CD8-positive, alpha-beta memory T cell (primary cell): ENCODE measurements at regions of chr22 and their contacts with region 1.

Region 1: GRCh38 chr22:39932918-39933649 is 27.1 kb upstream of the TMA7B start:
- DNase-seq: peak; percentile 46 to 76 (median 67)
- H3K4me3 ChIP-seq: peak overlapping the region; percentile 30
- H3K4me3 Mint-ChIP-seq: peak overlapping the region in 6 of 7 donors; percentile 74 to 85 (median 81)
- H3K27ac ChIP-seq: no peak overlapping the region
- H3K27ac Mint-ChIP-seq: peak overlapping the region in 7 of 8 donors; percentile 76 to 98 (median 92)
- H3K4me1 ChIP-seq: peaks cover 98% of the 10 kb centered on the region
- H3K4me1 Mint-ChIP-seq: peaks cover 55% of the 10 kb centered on the region in 3 donors
- H3K27me3 ChIP-seq: no peaks in the 10 kb centered on the region
- H3K27me3 Mint-ChIP-seq: no peaks in the 10 kb centered on the region

Region 2: DNA sequence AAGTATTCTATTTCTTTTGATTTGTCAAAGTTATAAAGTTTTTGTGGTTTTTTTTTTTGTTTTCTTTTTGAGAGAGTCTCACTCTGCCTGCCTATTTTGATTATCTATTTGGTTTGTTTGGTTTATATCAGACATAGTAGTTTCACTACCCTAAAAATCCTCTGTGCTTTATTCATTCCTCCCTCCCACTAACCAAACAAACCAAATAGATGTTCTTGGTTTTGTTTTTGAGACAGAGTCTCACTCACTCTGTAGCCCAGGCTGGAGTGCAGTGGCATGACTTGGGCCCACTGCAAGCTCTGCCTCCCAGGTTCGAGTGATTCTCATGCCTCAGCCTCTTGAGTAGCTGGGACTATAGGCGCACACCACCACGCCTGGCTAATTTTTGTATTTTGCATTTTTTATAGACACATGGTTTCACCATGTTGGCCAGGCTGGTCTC is 107.4 kb before region 1 on chr22:
- CTCF ChIA-PET with region 1: no interaction called
- POLR2A ChIA-PET with region 1: no interaction called
- DNase-seq: no peak
- H3K4me3 ChIP-seq: no peak overlapping the region
- H3K4me3 Mint-ChIP-seq: no peak overlapping the region
- H3K27ac ChIP-seq: no peak overlapping the region
- H3K27ac Mint-ChIP-seq: no peak overlapping the region
- H3K4me1 ChIP-seq: peaks cover under 1% of the 10 kb centered on the region
- H3K4me1 Mint-ChIP-seq: peaks cover 3 to 9% (median 9%) of the 10 kb centered on the region in 3 donors
- H3K27me3 ChIP-seq: no peaks in the 10 kb centered on the region
- H3K27me3 Mint-ChIP-seq: peaks cover 0 to 11% of the 10 kb centered on the region in 2 donors

Region 3: DNA sequence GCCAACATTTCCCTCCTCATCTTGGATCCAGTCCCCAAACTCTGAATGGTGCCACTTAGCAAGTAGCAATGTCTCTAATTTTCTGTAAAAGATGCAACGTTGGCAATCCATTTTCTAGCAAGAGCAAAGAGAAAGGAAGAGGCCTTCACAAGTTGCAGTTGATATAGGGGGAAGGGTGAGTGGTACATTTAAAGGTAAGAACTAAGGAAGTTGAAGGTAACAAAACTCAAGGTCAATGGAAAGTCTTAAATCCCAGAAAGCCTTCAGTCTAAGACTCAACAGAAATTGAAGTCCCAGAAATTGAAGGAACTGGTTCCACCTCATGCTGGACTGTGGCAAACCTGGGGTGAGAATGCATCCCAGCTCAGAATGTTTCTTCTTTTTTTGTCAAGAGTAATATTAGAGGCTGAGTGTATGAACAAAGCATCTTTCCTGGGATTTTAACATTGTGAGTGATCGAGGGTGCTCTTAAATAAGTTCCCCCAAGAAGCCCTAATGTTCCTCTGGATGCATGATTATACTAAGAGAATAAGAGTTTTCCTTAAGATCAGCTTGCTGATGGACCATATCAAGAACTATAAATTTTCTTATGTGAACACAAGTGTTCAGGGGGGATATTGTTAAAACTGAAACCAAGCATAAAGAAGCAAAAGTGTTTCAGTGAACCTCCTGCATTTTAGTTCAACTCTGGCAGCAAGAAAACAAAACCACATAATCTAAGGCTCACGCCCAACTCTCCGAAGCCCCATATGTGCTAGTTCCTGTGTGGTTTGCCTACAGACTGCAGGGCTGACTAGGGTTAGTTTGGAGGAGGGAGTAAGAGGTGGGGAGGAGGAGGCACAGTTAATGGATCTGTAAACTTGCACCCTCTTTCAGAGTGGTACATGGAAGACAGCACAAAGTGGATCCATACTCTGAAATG is 32.5 kb before region 1 on chr22 and contains the start of gene GRAP2:
- CTCF ChIA-PET with region 1: interaction called, 13 read pairs
- POLR2A ChIA-PET with region 1: interaction called, 9 read pairs
- DNase-seq: peak; percentile 47 to 88 (median 87)
- H3K4me3 ChIP-seq: peak within 1 kb of the TSS; percentile 71
- H3K4me3 Mint-ChIP-seq: peak within 1 kb of the TSS; percentile 91 to 99 (median 97)
- H3K27ac ChIP-seq: peak within 1 kb of the TSS; percentile 32
- H3K27ac Mint-ChIP-seq: peak within 1 kb of the TSS in 7 of 8 donors; percentile 93 to 99 (median 96)
- H3K4me1 ChIP-seq: peaks cover 34% of the 10 kb centered on the region
- H3K4me1 Mint-ChIP-seq: peaks cover 21 to 24% (median 23%) of the 10 kb centered on the region in 3 donors
- H3K27me3 ChIP-seq: no peaks in the 10 kb centered on the region
- H3K27me3 Mint-ChIP-seq: no peaks in the 10 kb centered on the region
- total RNA-seq, gene GRAP2: 41.8 to 53.2 TPM

Region 4: DNA sequence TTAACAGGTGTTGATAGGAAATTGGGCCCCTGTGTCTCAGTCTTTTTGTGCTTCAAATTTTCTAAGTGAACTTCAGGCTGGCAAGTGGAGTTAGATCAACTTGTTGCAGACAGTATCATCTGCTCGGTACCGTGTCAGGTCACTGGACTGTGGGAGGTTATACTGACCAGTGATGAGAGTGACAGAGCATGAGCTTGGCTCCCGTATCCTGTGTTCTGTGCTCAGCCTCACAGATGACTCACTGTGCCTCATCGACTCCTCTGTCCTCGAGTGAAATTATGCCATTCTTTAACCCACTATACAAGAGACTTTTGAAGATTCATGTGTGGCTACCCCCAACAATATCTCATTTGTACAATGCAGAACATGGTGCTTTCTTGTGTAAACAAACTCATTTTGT is 24.3 kb before region 1 on chr22:
- CTCF ChIA-PET with region 1: interaction called, 35 read pairs
- POLR2A ChIA-PET with region 1: interaction called, 9 read pairs
- DNase-seq: peak in 1 of 5 donors; percentile 71
- H3K4me3 ChIP-seq: peak overlapping the region; percentile 68
- H3K4me3 Mint-ChIP-seq: peak overlapping the region; percentile 91 to 99 (median 97)
- H3K27ac ChIP-seq: peak overlapping the region; percentile 0
- H3K27ac Mint-ChIP-seq: peak overlapping the region in 7 of 8 donors; percentile 91 to 99 (median 98)
- H3K4me1 ChIP-seq: peaks cover 60% of the 10 kb centered on the region
- H3K4me1 Mint-ChIP-seq: peaks cover 70 to 85% (median 77%) of the 10 kb centered on the region in 3 donors
- H3K27me3 ChIP-seq: no peaks in the 10 kb centered on the region
- H3K27me3 Mint-ChIP-seq: no peaks in the 10 kb centered on the region

Region 5: DNA sequence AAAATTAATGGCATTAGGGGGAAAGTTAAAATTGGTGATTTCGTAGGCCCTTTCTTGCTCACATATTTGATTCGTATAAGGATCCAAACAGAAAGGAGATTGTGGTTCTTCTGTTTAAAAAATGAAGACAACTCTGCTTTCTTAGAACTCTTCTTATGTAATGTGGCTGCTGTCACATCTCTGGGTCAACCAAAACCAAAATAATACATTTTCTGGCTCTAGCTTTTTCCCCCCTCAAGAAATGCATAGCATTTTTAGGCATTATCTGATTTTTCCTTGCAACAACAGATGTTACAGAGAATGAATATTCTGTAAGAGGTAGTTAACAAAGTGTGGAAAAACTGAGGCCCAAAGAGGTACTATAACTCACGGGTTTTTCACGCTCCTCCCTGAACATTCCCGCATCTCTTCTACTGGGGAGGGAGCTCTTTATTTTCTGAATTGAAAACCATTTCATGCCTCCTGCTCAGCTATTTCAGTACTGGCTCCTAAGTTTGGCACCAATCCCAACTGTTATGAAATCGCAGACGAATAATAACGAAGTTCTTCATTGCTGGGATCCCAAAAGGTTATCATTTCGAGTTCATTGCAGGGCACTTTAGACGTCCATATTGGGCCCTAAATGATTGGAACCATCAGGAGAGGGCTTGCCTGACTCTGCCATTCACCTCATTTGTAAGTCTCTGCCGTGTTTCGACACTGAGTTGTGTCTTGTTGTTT is 15.1 kb before region 1 on chr22:
- CTCF ChIA-PET with region 1: interaction called, 35 read pairs
- POLR2A ChIA-PET with region 1: interaction called, 12 read pairs
- DNase-seq: peak in 1 of 5 donors; percentile 55
- H3K4me3 ChIP-seq: peak overlapping the region; percentile 22
- H3K4me3 Mint-ChIP-seq: peak overlapping the region; percentile 81 to 99 (median 91)
- H3K27ac ChIP-seq: peak overlapping the region; percentile 27
- H3K27ac Mint-ChIP-seq: peak overlapping the region in 7 of 8 donors; percentile 87 to 99 (median 95)
- H3K4me1 ChIP-seq: peaks cover 97% of the 10 kb centered on the region
- H3K4me1 Mint-ChIP-seq: peaks cover 89 to 100% (median 97%) of the 10 kb centered on the region in 3 donors
- H3K27me3 ChIP-seq: no peaks in the 10 kb centered on the region
- H3K27me3 Mint-ChIP-seq: no peaks in the 10 kb centered on the region

Region 6: GRCh38 chr22:39943337-39943736 is 10.3 kb after region 1 on chr22:
- CTCF ChIA-PET with region 1: interaction called, 26 read pairs
- POLR2A ChIA-PET with region 1: interaction called, 3 read pairs
- DNase-seq: peak in 2 of 5 donors; percentile 52 to 66
- H3K4me3 ChIP-seq: no peak overlapping the region
- H3K4me3 Mint-ChIP-seq: peak overlapping the region; percentile 7 to 80 (median 68)
- H3K27ac ChIP-seq: peak overlapping the region; percentile 1
- H3K27ac Mint-ChIP-seq: peak overlapping the region in 7 of 8 donors; percentile 83 to 96 (median 94)
- H3K4me1 ChIP-seq: peaks cover 96% of the 10 kb centered on the region
- H3K4me1 Mint-ChIP-seq: peaks cover 91 to 98% (median 96%) of the 10 kb centered on the region in 3 donors
- H3K27me3 ChIP-seq: no peaks in the 10 kb centered on the region
- H3K27me3 Mint-ChIP-seq: no peaks in the 10 kb centered on the region

Region 7: DNA sequence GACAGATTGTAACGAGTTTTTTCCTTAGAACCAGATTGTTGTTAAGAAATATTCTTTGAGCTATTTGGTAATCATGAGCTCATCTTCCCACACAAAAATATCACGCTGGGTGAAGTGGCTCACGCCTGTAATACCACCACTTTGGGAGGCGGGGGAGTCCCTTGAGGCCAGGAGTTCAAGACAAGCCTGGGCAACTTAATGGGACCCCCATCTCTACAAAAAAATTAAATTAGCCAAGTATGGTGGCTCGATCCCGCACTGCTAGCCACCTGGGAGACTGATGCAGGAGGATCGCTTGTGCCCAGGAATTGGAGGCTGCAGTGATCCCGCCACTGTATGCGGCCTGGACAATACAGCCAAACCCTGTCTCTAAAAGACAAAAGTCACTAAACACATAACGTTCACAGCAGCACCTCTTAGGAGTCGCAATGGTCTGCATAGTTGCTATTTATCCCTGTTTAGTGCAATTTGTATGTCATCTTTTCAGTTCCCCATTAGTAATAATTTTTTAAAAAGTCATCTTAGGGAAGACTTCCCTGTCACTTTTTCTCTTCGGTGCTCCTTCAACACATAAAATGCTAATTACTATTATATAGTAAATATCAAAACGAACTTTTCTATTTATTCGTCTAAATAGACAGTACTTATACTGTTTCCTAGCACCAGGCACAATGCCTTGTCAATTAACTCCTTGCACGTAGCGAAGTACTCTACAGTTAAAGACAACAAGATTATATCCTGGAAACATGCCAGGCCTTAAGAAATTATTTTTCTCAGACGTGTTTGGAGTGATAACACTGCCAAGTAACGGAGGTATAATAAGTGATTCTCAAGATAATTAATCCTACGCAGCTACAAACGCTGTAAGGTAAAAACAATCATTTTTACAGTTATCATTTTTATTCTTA is 922.2 kb after region 1 on chr22:
- CTCF ChIA-PET with region 1: no interaction called
- POLR2A ChIA-PET with region 1: no interaction called
- DNase-seq: peak in 1 of 5 donors; percentile 4
- H3K4me3 ChIP-seq: peak overlapping the region; percentile 82
- H3K4me3 Mint-ChIP-seq: peak overlapping the region; percentile 94 to 99 (median 96)
- H3K27ac ChIP-seq: peak overlapping the region; percentile 99
- H3K27ac Mint-ChIP-seq: peak overlapping the region; percentile 91 to 100 (median 100)
- H3K4me1 ChIP-seq: peaks cover 45% of the 10 kb centered on the region
- H3K4me1 Mint-ChIP-seq: peaks cover 54 to 84% (median 63%) of the 10 kb centered on the region in 3 donors
- H3K27me3 ChIP-seq: no peaks in the 10 kb centered on the region
- H3K27me3 Mint-ChIP-seq: no peaks in the 10 kb centered on the region